Activated CD4-positive, alpha-beta memory T cell treated with anti-CD3 and anti-CD28 coated beads for 36 hours (primary cell): ENCODE measurements at regions of chr17 and their contacts with region 1.

Region 1: GRCh38 chr17:70144260-70144846 is 25.0 kb upstream of the KCNJ2 start:
- DNase-seq: no peak
- H3K4me3 Mint-ChIP-seq: no peak overlapping the region
- H3K27ac Mint-ChIP-seq: no peak overlapping the region
- H3K4me1 Mint-ChIP-seq: no peaks in the 10 kb centered on the region
- H3K27me3 Mint-ChIP-seq: peaks cover 3% of the 10 kb centered on the region

Region 2: DNA sequence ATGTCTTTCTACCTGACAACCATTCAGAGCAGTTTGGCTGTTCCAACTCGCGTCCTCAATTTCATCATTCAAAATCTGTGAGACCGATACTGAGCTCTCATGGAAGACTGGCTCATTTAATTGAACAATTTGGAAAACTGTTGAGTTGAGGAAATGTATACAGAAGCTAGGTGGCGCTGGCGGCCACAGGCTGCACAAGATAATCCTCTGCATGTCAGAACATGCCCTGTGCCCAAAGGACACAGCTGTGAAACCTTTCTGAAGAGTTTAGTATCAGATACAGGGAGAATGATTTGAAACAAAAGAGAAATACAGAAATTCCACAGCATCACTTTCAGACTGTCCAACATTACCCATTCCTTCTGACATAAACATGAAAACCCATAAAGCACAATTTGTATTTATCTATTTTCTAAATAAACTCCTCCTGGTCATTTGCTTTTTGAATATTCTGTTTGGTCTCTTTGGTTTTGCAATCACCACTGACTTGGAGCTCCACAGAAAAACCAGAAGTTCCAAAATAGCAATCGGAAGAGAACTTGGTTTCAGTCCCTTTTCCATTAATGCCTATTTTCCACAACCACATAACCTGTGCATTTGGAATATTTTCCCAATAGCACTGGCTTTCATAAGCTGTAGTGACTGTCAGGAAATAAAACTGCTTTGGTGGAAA is 537.1 kb before region 1 on chr17:
- CTCF ChIA-PET with region 1: interaction called, 8 read pairs
- POLR2A ChIA-PET with region 1: no interaction called
- intact Hi-C with region 1: loop called (anchors 5 kb)
- DNase-seq: peak; percentile 56
- H3K4me3 Mint-ChIP-seq: no peak overlapping the region
- H3K27ac Mint-ChIP-seq: no peak overlapping the region
- H3K4me1 Mint-ChIP-seq: peaks cover 10% of the 10 kb centered on the region
- H3K27me3 Mint-ChIP-seq: peaks cover 2% of the 10 kb centered on the region